ENCODE measurements at regions of chr14 and their contacts with region 1.

Region 1: GRCh38 chr14:71753126-71753830 is 179.0 kb upstream of the RGS6 start:
- DNase-seq: peak; percentile 89 to 95 (median 91)
- H3K4me3 ChIP-seq: peak overlapping the region in 1 of 3 donors; percentile 32
- H3K27ac ChIP-seq: no peak overlapping the region
- H3K4me1 ChIP-seq: no peaks in the 10 kb centered on the region
- H3K27me3 ChIP-seq: no peaks in the 10 kb centered on the region
- CTCF ChIP-seq: peak; percentile 97

Region 2: GRCh38 chr14:71142336-71143038 is 610.8 kb before region 1 on chr14:
- intact Hi-C with region 1: loop called (anchors 5 kb)
- DNase-seq: no peak
- H3K4me3 ChIP-seq: no peak overlapping the region
- H3K27ac ChIP-seq: no peak overlapping the region
- H3K4me1 ChIP-seq: peaks cover 0 to 12% (median 9%) of the 10 kb centered on the region in 3 donors
- H3K27me3 ChIP-seq: no peaks in the 10 kb centered on the region
- CTCF ChIP-seq: no peak

Region 3: GRCh38 chr14:71863064-71863463 is 109.8 kb after region 1 on chr14:
- intact Hi-C with region 1: no loop called
- DNase-seq: no peak
- H3K4me3 ChIP-seq: no peak overlapping the region
- H3K27ac ChIP-seq: no peak overlapping the region
- H3K4me1 ChIP-seq: no peaks in the 10 kb centered on the region
- H3K27me3 ChIP-seq: no peaks in the 10 kb centered on the region
- CTCF ChIP-seq: no peak

Measured in kidney (tissue), 22 donors.